ENCODE measurements at regions of chr19 and their contacts with region 1.

Region 1: DNA sequence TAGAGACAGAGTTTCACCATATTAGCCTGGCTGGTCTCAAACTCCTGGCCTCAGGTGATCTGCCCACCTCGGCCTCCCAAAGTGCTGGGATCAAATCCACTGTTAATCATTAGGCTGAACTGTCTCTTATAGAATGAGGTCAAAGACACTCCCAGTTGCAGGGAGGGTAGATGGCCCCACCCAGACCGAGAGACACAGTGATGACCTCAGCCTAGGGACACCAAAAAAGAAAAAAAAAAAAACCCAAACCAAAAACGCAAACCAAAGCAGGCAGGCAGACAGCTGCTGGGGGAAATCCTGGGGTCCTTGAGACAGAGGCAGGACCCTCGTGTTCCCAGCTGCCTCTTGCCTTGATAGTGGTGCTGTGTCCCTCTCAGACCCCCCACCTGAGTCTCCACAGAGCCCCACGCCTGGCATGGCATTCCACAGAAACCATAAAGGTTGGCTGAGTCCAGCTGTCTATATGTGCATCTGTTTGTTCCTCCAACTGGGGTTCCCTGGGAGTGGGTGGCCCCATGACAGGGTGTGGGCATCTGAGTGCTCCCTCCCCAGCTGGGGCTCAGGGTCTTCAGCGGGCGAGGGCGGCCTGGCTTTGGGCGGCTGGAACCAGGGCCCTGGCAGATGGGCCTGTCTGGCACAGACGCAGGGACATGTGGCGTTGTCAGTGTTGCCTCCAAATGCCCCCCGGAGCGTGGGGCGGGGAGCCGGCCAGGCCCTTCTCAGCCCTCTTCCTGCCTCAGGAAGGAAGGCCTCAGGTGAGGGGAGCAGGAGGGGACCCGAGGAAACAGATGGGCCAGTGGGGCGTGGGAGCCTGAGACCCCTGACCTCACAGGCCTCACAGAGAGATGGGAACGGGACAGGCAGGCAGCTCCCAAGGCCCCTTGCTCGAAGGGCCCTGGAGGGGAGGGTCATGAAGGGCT is 5.2 kb downstream of the DAND5 start:
- DNase-seq: peak in 1 of 3 donors; percentile 4
- H3K4me3 ChIP-seq: no peak overlapping the region
- H3K4me3 Mint-ChIP-seq: no peak overlapping the region
- H3K27ac ChIP-seq: no peak overlapping the region
- H3K27ac Mint-ChIP-seq: no peak overlapping the region
- H3K4me1 ChIP-seq: no peaks in the 10 kb centered on the region
- H3K4me1 Mint-ChIP-seq: peaks cover 2% of the 10 kb centered on the region
- H3K27me3 ChIP-seq: peaks cover 0 to 2% of the 10 kb centered on the region in 2 donors
- H3K27me3 Mint-ChIP-seq: peaks cover 2 to 10% (median 6%) of the 10 kb centered on the region in 3 donors
- CTCF ChIP-seq: no peak

Region 2: DNA sequence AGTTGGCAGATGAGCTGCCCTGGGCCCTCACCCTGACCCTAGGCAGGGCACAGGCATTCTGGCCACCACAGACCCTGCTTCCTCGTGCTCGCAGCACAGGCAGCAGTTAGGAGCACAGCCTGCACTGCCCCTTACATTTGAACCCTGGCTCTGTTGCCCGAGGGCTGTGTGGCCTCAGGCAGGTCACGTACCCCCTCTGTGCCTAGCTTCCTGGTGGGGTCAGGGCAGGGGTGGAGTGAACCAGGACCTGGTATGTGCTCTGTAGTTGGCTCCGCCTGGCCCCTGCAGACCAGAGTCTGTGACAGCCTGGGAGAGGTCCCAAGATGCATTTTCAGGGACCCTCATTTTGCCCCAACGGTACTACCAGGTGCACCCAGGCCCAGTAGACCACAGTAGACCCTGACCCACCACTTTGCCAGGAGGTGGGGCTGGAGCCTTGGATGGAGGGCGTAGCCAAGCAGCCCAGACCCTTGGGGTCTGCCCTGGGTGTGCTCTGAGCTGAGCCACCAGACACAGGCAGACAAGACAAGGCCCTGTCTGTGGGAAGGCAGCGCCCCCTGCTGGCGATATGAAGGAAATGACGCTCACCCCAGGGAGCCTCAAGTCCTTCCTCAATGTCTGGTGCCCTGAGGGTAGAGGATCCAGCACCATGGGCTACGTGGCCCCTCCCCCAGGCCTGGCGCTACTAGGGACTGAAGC is 119.0 kb after region 1 on chr19:
- intact Hi-C with region 1: loop called (anchors 2 kb)
- DNase-seq: peak; percentile 84 to 89 (median 88)
- H3K4me3 ChIP-seq: peak overlapping the region in 1 of 3 experiments; percentile 84
- H3K4me3 Mint-ChIP-seq: peak overlapping the region; percentile 46 to 52
- H3K27ac ChIP-seq: no peak overlapping the region
- H3K27ac Mint-ChIP-seq: peak overlapping the region in 1 of 7 donors; percentile 25
- H3K4me1 ChIP-seq: peaks cover 26 to 39% of the 10 kb centered on the region in 2 donors
- H3K4me1 Mint-ChIP-seq: peaks cover 22% of the 10 kb centered on the region
- H3K27me3 ChIP-seq: no peaks in the 10 kb centered on the region
- H3K27me3 Mint-ChIP-seq: peaks cover 0 to 5% (median 3%) of the 10 kb centered on the region in 3 donors
- CTCF ChIP-seq: peak; percentile 97

Region 3: GRCh38 chr19:13146763-13147563 is 172.4 kb after region 1 on chr19:
- intact Hi-C with region 1: no loop called
- DNase-seq: peak; percentile 83 to 91 (median 90)
- H3K4me3 ChIP-seq: peak overlapping the region in 1 of 3 experiments; percentile 42
- H3K4me3 Mint-ChIP-seq: peak overlapping the region; percentile 46 to 98
- H3K27ac ChIP-seq: peak overlapping the region; percentile 75 to 77
- H3K27ac Mint-ChIP-seq: peak overlapping the region; percentile 96 to 99 (median 99)
- H3K4me1 ChIP-seq: peaks cover 34 to 57% of the 10 kb centered on the region in 2 donors
- H3K4me1 Mint-ChIP-seq: peaks cover 39% of the 10 kb centered on the region
- H3K27me3 ChIP-seq: no peaks in the 10 kb centered on the region
- H3K27me3 Mint-ChIP-seq: peaks cover 0 to 4% (median 3%) of the 10 kb centered on the region in 3 donors
- CTCF ChIP-seq: no peak